Testis (tissue), 5 donors: ENCODE measurements at regions of chr1 and their contacts with region 1.

Region 1: GRCh38 chr1:171801487-171801891 is 20.0 kb downstream of the METTL13 start:
- DNase-seq: no peak
- H3K4me3 ChIP-seq: no peak overlapping the region
- H3K27ac ChIP-seq: no peak overlapping the region
- H3K4me1 ChIP-seq: peaks cover 26% of the 10 kb centered on the region
- H3K27me3 ChIP-seq: no peaks in the 10 kb centered on the region
- CTCF ChIP-seq: peak; percentile 4 to 76 (median 70)
- POLR2A ChIP-seq: no peak

Region 2: DNA sequence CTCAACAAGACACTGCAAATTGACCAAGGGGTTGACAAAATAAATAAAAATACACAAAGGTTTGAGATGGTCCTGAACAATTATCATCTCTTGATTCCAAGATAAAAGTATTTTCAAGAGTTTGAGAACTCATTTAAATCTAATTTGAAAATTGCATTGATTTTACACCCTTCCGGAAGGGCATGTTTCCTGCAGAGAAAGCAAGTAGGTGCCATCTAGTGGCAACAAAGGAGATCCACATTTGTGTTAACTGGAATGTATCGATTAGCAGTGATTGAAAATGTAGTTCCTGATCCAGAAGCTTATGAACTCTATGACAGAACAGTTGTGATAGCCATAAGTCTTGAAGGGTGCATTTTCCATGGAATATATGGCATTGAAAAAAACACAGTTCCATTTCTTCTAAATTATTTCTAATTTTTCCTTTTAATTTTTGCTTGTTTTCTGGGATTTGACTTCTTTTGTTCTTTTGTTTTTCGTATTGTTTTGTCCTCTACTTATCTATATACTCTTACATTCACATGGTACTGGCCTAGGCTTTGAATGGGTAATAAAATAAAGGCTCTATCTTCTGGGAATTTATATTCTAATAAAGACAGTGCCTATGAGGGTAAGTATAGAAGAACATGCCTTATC is 183.5 kb after region 1 on chr1:
- intact Hi-C with region 1: loop called (anchors 5 kb)
- DNase-seq: no peak
- H3K4me3 ChIP-seq: no peak overlapping the region
- H3K27ac ChIP-seq: no peak overlapping the region
- H3K4me1 ChIP-seq: no peaks in the 10 kb centered on the region
- H3K27me3 ChIP-seq: no peaks in the 10 kb centered on the region
- CTCF ChIP-seq: peak; percentile 75 to 79 (median 77)
- POLR2A ChIP-seq: no peak